Left cardiac atrium (tissue), 4 donors: ENCODE measurements at regions of chr4 and their contacts with region 1.

Region 1: DNA sequence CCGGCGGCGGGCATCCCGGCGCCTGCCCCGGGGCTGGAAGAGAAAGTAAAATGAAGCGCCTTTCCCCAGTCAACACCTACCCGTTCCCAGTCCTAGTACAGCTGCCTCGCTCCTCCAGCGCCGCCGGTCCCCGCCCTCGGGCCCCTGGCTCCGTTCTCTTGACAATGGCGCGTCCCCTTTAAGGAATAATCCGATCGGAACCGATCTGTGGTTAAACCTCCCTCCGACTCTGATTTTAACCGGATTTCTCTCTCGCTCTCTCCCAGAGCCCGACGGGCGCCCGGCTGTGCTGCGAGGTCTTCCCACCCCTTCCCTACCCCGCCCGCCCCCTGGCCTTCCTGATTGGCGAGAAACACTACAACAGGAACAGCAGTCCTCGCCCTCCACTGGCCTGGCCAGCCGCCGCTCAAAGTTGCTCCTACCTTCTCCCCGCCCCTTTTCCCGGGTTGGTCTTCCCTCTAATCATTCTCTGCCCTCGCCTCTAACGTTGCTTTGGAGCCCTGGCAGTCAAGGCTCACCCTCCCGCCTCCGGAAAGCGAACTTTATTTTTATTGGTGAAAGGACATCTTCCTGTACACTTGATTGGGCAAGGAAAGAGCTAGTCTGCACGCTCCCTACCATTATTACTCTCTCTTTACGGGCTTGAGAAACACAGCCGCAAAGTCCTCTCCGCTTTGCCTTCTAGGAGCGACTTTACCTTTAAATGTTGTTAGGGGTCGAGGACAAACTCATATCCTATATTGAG is at the start of gene FRYL:
- DNase-seq: peak; percentile 99
- ATAC-seq: peak; percentile 93 to 96
- total RNA-seq, gene FRYL: 38.8 to 41.3 TPM

Region 2: DNA sequence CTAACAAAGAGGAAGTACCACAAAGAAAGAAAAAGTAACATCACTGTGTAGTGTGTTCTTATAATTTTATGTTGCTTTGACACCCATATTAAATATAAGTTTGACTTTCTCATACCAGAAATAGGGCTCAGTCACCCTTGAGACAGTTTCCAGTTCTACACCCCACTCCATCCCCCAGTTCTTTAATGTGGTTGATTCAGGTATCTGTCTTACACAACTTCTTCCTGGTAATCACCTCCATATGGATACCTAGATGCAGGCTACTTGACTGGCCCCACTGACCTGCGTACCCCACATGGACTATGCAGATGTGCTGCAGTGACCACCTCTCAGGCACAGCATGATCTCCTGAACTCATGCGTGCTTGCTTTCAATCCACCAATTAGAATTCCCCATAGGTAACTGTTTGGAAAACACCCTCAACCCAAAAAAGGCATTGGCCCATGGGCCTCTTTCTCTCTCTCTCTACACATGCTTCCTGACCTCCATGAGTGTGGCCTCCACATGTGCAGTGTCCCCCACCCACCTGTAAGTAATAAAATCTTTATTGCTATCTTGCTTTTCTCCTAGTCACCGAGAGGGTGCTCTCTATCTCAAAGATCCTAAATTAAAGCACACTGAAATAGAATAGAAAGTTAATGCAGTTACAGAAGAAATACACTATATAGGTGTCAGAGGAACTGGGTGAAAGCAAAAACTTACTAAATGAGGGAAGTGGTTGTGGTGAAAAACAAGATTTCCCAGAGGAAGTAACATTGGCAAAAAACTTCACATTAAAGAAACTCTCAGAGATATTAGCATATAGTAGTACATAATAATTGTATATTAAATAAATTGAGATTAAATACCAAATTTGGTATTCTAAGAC is 191.7 kb before region 1 on chr4:
- intact Hi-C with region 1: loop called (anchors 10 kb)
- DNase-seq: no peak
- ATAC-seq: no peak

Region 3: DNA sequence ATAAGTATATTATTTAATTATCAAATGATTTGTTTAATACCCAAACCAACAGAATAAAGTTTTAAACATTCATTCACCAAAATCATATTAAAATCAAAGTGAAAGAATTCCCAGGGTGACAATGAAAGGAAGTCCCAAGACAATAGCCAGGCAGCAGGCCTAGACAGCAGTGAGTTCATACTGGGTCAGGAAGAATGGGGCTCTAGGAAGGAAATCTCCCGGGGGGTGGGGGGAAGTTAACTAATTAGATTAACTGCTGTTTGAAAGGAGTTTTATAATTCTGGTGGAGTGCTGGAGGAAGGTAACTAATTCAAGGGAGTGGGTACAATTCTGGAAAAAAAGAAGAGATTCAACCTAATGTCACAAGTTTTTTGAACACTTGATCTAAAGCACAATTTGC is 186.0 kb before region 1 on chr4:
- intact Hi-C with region 1: loop called (anchors 10 kb)
- DNase-seq: peak; percentile 34
- ATAC-seq: peak in 1 of 2 donors; percentile 63

Region 4: DNA sequence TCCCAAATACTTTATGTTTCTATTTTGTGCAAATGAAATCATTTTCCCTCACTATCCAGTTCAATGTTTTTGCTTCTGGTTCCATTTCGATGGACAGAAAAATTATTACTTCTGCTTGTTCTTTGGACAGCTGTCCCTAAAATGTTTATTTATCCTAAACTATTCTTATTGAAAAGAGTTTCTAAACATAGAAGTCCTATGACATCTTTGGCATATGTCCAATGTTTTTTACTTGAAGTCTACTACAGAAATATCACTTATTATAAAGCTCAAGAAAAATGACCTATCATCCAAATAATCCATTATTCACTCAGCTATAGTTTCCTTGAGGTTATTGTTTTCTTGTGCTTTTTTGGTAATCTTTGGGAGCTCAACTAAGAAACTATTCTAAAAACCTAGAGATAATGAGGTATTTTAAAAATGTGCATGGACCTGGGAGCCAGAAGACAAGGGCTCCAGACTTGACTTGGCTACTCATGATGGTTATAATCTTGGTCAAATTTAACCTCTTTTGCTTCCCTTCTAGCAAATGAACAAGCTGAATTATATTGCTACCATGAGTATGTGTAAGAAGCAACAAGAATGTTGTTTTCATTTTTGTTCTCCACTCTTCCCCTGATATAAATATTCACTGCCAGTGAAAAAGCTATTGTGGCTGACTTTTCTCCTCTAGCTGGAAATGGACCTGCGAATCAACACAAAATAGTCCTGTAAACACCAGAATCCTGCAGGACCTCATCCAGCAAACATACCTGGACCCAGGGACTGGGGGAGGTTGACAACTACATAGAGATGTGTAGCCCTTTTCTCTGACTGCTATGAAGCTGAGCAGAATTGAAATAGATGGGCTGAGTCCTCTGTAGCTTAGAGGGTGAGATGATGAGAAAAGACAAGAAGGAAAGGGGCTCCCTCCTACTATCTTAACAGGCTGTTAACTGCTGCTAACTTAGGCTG is 137.5 kb before region 1 on chr4:
- intact Hi-C with region 1: no loop called
- DNase-seq: no peak
- ATAC-seq: no peak

Region 5: GRCh38 chr4:48830706-48831531 is 50.7 kb after region 1 on chr4 and contains the start of gene OCIAD1:
- intact Hi-C with region 1: loop called in 1 of 2 experiments (anchors 1 kb)
- DNase-seq: peak; percentile 98
- ATAC-seq: peak; percentile 99 to 100
- total RNA-seq, gene OCIAD1: 128 to 149 TPM